ENCODE measurements at regions of chr12 and their contacts with region 1.

Region 1: DNA sequence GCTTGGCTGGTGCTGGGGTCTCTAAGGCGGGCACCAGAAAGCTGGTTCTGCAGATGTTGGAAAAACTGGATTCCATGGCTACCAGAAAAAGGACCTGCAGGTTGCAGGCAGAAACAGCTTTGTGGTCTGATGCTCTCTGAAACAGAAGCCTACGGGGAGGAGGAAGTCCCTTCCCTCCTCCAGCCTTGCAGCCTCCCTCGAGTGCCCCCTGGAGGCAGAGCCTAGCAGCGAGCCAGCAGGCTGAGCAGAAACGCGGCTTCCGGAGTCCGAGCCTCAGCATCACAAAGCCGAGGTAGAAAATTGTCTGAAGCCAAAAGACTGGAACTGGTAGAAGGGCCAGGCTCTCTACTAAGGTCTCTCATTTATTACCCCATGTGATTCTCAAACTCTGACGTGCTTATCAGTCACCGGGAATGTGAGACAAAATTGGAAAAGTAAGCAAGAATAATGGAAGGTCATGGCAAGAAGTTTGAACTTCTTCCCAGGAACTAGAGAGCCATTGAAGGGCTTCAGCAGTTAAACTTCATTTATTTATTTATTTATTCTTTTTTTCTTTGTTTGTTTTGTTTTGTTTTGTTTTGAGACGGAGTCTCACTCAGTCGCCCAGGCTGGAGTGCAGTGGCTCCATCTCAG is 82.2 kb upstream of the CPSF6 start:
- DNase-seq: peak; percentile 85
- H3K4me3 Mint-ChIP-seq: no peak overlapping the region
- H3K27ac Mint-ChIP-seq: no peak overlapping the region
- H3K4me1 Mint-ChIP-seq: peaks cover 47% of the 10 kb centered on the region
- H3K27me3 Mint-ChIP-seq: no peaks in the 10 kb centered on the region

Region 2: DNA sequence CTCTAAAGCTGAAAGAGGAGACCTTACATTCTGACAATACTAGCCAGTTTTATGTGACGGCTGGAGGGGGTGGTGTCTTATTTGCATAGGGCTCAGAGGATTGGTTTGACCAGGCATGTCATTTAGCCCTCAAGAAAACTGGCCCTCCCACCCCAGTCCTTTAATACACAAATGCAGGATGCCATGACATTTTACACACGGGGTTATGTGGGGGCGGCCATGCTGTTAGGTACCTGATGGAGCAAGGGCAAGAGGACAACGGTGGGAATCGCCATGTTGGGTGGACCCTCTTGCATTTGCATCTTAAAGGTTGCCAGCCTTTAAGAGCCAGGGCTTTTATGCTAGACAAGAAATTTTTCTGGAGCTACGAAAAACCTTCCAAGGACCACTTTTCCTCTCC is 325.9 kb before region 1 on chr12:
- intact Hi-C with region 1: loop called (anchors 5 kb)
- DNase-seq: no peak
- H3K4me3 Mint-ChIP-seq: no peak overlapping the region
- H3K27ac Mint-ChIP-seq: no peak overlapping the region
- H3K4me1 Mint-ChIP-seq: peaks cover 13% of the 10 kb centered on the region
- H3K27me3 Mint-ChIP-seq: no peaks in the 10 kb centered on the region

Region 3: DNA sequence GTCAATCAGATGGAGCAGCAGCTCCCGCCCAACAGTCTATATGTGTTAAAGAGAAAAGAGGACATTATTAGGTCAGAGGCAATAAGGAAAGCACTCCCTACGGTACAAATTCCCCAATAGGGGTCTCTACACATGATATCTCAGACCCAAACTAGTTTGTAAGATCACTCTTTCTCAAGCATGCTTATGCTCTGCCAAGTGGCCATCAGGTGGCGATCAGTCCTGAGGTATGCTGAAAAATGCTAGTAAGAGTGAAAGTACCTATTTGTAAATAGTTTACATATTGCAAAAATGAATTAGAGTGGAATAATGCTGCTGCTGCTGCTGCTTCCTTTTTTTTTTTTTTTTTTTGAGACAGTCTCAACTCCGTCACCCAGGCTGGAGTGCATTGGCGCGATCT is 285.2 kb before region 1 on chr12:
- intact Hi-C with region 1: loop called (anchors 10 kb)
- DNase-seq: no peak
- H3K4me3 Mint-ChIP-seq: no peak overlapping the region
- H3K27ac Mint-ChIP-seq: no peak overlapping the region
- H3K4me1 Mint-ChIP-seq: peaks cover 13% of the 10 kb centered on the region
- H3K27me3 Mint-ChIP-seq: no peaks in the 10 kb centered on the region

Region 4: DNA sequence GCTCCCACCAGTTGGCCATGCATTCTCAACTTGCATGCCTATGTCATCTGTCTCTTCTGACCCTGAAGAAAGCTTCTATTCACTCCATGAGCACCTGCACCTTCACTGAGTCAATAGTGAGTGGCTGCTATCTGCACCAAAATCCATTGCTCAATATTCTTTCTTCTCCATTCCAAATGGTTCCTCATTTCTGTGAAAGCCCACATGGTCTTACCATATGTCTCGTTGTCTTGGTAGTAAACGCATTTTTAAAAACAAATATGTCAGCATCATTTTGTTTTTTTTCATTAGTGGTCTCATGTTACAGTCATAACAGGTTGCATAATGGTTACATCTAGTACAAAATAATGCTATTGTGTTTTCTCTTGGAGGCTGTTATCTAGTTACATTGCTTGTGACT is 117.2 kb before region 1 on chr12:
- intact Hi-C with region 1: no loop called
- DNase-seq: no peak
- H3K4me3 Mint-ChIP-seq: no peak overlapping the region
- H3K27ac Mint-ChIP-seq: no peak overlapping the region
- H3K4me1 Mint-ChIP-seq: peaks cover under 1% of the 10 kb centered on the region
- H3K27me3 Mint-ChIP-seq: peaks cover 1% of the 10 kb centered on the region

Region 5: DNA sequence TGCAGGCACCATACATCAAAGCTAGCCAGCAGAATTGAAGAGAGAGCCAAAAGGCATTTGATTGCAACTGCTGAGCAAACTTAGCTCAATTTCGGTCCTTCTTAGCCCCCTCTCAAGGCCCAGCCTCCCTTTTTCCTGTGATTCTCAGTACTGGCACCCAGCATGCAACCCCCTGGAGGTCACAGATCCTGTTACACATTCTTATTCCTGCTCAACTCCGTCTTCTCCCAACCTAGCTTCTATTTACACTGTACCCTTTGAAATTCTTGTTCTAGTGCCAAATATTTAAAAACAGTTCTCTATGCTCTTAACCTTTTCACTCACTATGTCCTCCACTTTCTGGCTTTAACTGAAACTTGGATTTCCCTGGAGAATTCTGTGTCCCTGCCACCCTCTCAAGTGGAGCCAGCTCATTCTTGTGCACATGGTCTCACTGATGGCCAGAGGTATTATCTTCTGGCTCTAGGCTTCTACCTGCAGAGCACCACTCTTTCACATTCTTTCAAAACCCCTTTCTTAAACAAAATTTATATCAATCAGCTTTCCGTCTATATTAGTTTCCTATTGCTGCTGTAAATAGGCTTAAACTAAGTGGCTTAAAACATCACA is 49.0 kb before region 1 on chr12:
- intact Hi-C with region 1: no loop called
- DNase-seq: no peak
- H3K4me3 Mint-ChIP-seq: no peak overlapping the region
- H3K27ac Mint-ChIP-seq: no peak overlapping the region
- H3K4me1 Mint-ChIP-seq: no peaks in the 10 kb centered on the region
- H3K27me3 Mint-ChIP-seq: peaks cover 11% of the 10 kb centered on the region

Region 6: GRCh38 chr12:69179786-69180185 is 22.6 kb after region 1 on chr12:
- intact Hi-C with region 1: no loop called
- DNase-seq: no peak
- H3K4me3 Mint-ChIP-seq: no peak overlapping the region
- H3K27ac Mint-ChIP-seq: no peak overlapping the region
- H3K4me1 Mint-ChIP-seq: no peaks in the 10 kb centered on the region
- H3K27me3 Mint-ChIP-seq: peaks cover 14% of the 10 kb centered on the region

Region 7: GRCh38 chr12:69239352-69239921 is 82.3 kb after region 1 on chr12 and contains the start of gene CPSF6:
- intact Hi-C with region 1: loop called (anchors 2 kb)
- DNase-seq: peak; percentile 93
- H3K4me3 Mint-ChIP-seq: peak within 1 kb of the TSS; percentile 96
- H3K27ac Mint-ChIP-seq: peak within 1 kb of the TSS; percentile 96
- H3K4me1 Mint-ChIP-seq: peaks cover 36% of the 10 kb centered on the region
- H3K27me3 Mint-ChIP-seq: no peaks in the 10 kb centered on the region
- total RNA-seq, gene CPSF6: 107 and 119 TPM in 2 replicates

Region 8: GRCh38 chr12:69254046-69254445 is 96.9 kb after region 1 on chr12:
- intact Hi-C with region 1: loop called (anchors 1 kb)
- DNase-seq: no peak
- H3K4me3 Mint-ChIP-seq: no peak overlapping the region
- H3K27ac Mint-ChIP-seq: peak overlapping the region; percentile 54
- H3K4me1 Mint-ChIP-seq: peaks cover 36% of the 10 kb centered on the region
- H3K27me3 Mint-ChIP-seq: no peaks in the 10 kb centered on the region

Region 9: DNA sequence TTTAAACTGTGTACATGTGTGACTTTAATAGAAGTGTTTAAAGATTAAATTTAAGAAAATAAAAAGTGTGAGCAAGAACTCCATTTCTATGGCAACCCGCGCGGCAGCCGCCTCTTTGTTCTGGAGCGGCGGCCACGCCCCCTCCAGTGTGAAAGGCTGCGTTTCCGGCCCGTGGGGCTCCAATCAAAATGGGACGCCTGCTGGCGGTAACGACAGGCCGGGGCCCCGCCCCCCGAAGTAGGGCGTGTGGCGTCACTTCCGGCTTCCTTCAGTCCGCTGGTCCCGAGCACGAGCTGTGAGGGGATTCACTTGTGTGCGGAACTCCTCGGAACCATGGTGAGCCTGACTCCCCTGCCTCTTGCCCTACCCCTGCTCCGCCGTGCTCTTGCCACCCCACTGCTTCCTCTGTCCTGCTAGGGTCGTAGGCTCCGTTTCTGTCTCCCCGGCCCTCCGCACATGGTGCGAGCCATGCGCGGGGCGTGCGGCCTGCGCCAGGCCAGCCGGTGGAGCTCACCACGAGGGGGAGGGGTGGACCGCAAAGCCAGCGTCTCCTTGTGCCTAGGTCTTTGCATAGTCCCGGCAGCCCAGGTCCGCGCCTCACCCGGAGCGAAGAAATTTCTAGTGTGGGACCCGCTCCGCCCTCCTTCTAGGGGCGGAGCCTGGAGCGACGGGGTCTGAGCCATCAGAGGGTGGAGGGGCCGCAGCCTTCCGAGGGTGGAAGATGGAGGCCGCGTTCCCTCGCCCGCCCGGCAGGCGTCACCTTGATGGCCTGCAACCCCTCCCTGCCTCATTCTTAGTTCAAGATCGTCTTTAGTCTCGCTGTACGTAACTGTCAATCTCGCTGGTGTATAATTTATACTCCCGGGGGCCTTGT is 428.3 kb after region 1 on chr12 and contains the start of gene CCT2:
- intact Hi-C with region 1: loop called (anchors 10 kb)
- DNase-seq: peak; percentile 95
- H3K4me3 Mint-ChIP-seq: peak within 1 kb of the TSS; percentile 97
- H3K27ac Mint-ChIP-seq: peak within 1 kb of the TSS; percentile 97
- H3K4me1 Mint-ChIP-seq: peaks cover 15% of the 10 kb centered on the region
- H3K27me3 Mint-ChIP-seq: no peaks in the 10 kb centered on the region
- total RNA-seq, gene CCT2: 409 and 416 TPM in 2 replicates

Region 10: GRCh38 chr12:69608114-69608513 is 451.0 kb after region 1 on chr12:
- intact Hi-C with region 1: no loop called
- DNase-seq: no peak
- H3K4me3 Mint-ChIP-seq: no peak overlapping the region
- H3K27ac Mint-ChIP-seq: no peak overlapping the region
- H3K4me1 Mint-ChIP-seq: no peaks in the 10 kb centered on the region
- H3K27me3 Mint-ChIP-seq: peaks cover 15% of the 10 kb centered on the region

Region 11: GRCh38 chr12:69738351-69739286 is 581.5 kb after region 1 on chr12 and contains the start of gene RAB3IP:
- intact Hi-C with region 1: loop called (anchors 5 kb)
- DNase-seq: peak; percentile 87
- H3K4me3 Mint-ChIP-seq: peak within 1 kb of the TSS; percentile 81
- H3K27ac Mint-ChIP-seq: peak within 1 kb of the TSS; percentile 70
- H3K4me1 Mint-ChIP-seq: peaks cover 13% of the 10 kb centered on the region
- H3K27me3 Mint-ChIP-seq: peaks cover 33% of the 10 kb centered on the region
- total RNA-seq, gene RAB3IP: 29.8 and 37.7 TPM in 2 replicates

Measured in activated T-helper 2 cell treated with anti-CD3 and anti-CD28 coated beads, Interferon-gamma antibody, Interleukin-2, Interleukin-4, amounts not matched to agents 10 μg/mL and 5 μg/mL and 100 μg/mL, durations not matched to agents 14 hours and 24 hours and 36 hours (primary cell).